Naive thymus-derived CD4-positive, alpha-beta T cell (primary cell): ENCODE measurements at regions of chr12 and their contacts with region 1.

Region 1: GRCh38 chr12:53746592-53747092 is 5.1 kb downstream of the CISTR start:
- DNase-seq: peak; percentile 71 to 89 (median 84)
- ATAC-seq: peak; percentile 95
- H3K4me3 ChIP-seq: no peak overlapping the region
- H3K4me3 Mint-ChIP-seq: peak overlapping the region in 8 of 10 donors; percentile 52 to 78 (median 66)
- H3K27ac ChIP-seq: no peak overlapping the region
- H3K27ac Mint-ChIP-seq: no peak overlapping the region
- H3K4me1 ChIP-seq: peaks cover 9 to 20% of the 10 kb centered on the region in 2 donors
- H3K4me1 Mint-ChIP-seq: peaks cover 3 to 26% (median 7%) of the 10 kb centered on the region in 7 donors
- H3K27me3 ChIP-seq: no peaks in the 10 kb centered on the region
- H3K27me3 Mint-ChIP-seq: peaks cover 31 to 47% (median 35%) of the 10 kb centered on the region in 5 donors

Region 2: GRCh38 chr12:52480073-52480472 is 1266.6 kb before region 1 on chr12:
- CTCF ChIA-PET with region 1: no interaction called
- POLR2A ChIA-PET with region 1: no interaction called
- intact Hi-C with region 1: no loop called
- DNase-seq: no peak
- ATAC-seq: no peak
- H3K4me3 ChIP-seq: no peak overlapping the region
- H3K4me3 Mint-ChIP-seq: no peak overlapping the region
- H3K27ac ChIP-seq: no peak overlapping the region
- H3K27ac Mint-ChIP-seq: no peak overlapping the region
- H3K4me1 ChIP-seq: no peaks in the 10 kb centered on the region
- H3K4me1 Mint-ChIP-seq: no peaks in the 10 kb centered on the region
- H3K27me3 ChIP-seq: no peaks in the 10 kb centered on the region
- H3K27me3 Mint-ChIP-seq: peaks cover 19 to 39% (median 25%) of the 10 kb centered on the region in 5 donors

Region 3: DNA sequence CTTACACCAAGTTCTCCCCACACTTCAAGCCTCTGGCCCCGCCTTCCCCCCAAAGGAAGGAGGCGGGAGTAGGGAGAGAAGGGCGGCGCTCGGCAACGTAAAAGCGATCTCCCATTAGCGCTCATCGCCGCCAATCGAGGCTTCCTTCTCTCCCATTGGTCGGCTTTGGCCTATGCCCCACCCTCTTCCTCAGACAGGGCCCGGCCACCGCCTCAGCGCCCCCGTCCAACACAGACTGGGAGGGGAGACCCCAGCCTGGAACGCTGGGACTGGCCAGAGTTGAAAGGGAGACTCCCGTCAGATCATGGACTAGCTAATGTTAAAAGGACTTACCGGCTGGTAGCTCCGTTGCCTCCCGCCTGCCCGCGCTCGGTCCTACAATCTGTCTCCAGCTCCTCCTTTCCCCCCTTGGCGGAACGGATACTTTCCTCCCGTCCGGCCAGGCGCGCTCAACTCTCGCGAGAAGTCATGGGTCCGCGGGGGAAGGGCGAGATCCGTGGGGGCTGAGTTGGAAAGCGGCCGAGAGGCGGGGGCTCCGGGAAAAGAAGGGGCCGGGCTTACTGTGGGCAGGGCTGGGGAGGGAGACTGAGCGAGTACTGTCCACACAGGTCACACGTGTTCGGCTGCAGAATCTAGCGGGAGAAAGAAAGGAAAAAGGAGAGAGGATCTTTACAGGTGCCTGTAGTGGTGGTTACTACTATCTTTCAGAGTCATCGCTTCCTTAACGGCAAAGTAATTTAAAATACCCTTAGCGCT is 120.5 kb before region 1 on chr12 and contains the start of gene ATF7:
- CTCF ChIA-PET with region 1: interaction called, 4 read pairs
- POLR2A ChIA-PET with region 1: no interaction called
- intact Hi-C with region 1: loop called in 1 of 2 experiments (anchors 5 kb)
- DNase-seq: peak; percentile 95 to 100 (median 99)
- ATAC-seq: peak; percentile 97
- H3K4me3 ChIP-seq: peak within 1 kb of the TSS; percentile 92
- H3K4me3 Mint-ChIP-seq: peak within 1 kb of the TSS; percentile 97 to 100 (median 98)
- H3K27ac ChIP-seq: peak within 1 kb of the TSS; percentile 83
- H3K27ac Mint-ChIP-seq: peak within 1 kb of the TSS; percentile 95 to 99 (median 97)
- H3K4me1 ChIP-seq: peaks cover 20 to 32% of the 10 kb centered on the region in 2 donors
- H3K4me1 Mint-ChIP-seq: peaks cover 30 to 55% (median 49%) of the 10 kb centered on the region in 7 donors
- H3K27me3 ChIP-seq: no peaks in the 10 kb centered on the region
- H3K27me3 Mint-ChIP-seq: peaks cover 0 to 6% (median 0%) of the 10 kb centered on the region in 5 donors
- total RNA-seq, gene ATF7: 21.9 to 39.5 (median 30.9) TPM

Region 4: DNA sequence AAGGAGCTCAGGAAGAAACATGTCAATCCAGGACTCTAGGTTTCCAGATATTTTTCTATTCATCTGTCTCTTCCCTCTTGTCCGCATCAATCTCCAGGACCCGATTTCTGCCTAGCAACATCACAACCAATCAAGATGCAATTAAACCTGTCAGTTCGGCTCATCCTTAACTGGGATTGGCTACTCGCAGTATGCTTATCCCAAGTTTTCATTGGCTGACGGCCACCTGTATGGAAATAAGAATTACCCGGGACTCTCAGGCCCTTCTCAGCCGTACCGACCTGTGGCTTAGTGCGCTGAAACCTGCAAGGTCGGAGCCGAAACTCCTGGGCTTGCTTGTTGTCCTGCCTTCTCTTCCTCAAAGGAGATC is 50.4 kb before region 1 on chr12:
- CTCF ChIA-PET with region 1: interaction called, 143 read pairs
- POLR2A ChIA-PET with region 1: interaction called, 3 read pairs
- intact Hi-C with region 1: loop called (anchors 1 kb)
- DNase-seq: no peak
- ATAC-seq: no peak
- H3K4me3 ChIP-seq: no peak overlapping the region
- H3K4me3 Mint-ChIP-seq: peak overlapping the region; percentile 12 to 88 (median 78)
- H3K27ac ChIP-seq: no peak overlapping the region
- H3K27ac Mint-ChIP-seq: no peak overlapping the region
- H3K4me1 ChIP-seq: peaks cover 7 to 23% of the 10 kb centered on the region in 2 donors
- H3K4me1 Mint-ChIP-seq: peaks cover 26 to 33% (median 30%) of the 10 kb centered on the region in 7 donors
- H3K27me3 ChIP-seq: peaks cover 26 to 30% of the 10 kb centered on the region in 2 donors
- H3K27me3 Mint-ChIP-seq: peaks cover 80 to 91% (median 86%) of the 10 kb centered on the region in 5 donors

Region 5: GRCh38 chr12:53709671-53710070 is 37.0 kb before region 1 on chr12:
- CTCF ChIA-PET with region 1: interaction called, 132 read pairs
- POLR2A ChIA-PET with region 1: no interaction called
- intact Hi-C with region 1: no loop called
- DNase-seq: no peak
- ATAC-seq: no peak
- H3K4me3 ChIP-seq: no peak overlapping the region
- H3K4me3 Mint-ChIP-seq: no peak overlapping the region
- H3K27ac ChIP-seq: no peak overlapping the region
- H3K27ac Mint-ChIP-seq: no peak overlapping the region
- H3K4me1 ChIP-seq: no peaks in the 10 kb centered on the region
- H3K4me1 Mint-ChIP-seq: peaks cover 0 to 2% (median 0%) of the 10 kb centered on the region in 7 donors
- H3K27me3 ChIP-seq: peaks cover 0 to under 1% of the 10 kb centered on the region in 2 donors
- H3K27me3 Mint-ChIP-seq: peaks cover 8 to 36% (median 12%) of the 10 kb centered on the region in 5 donors

Region 6: GRCh38 chr12:53727310-53728041 is 19.2 kb before region 1 on chr12 and contains the start of gene CALCOCO1:
- CTCF ChIA-PET with region 1: interaction called, 104 read pairs
- POLR2A ChIA-PET with region 1: interaction called, 13 read pairs
- intact Hi-C with region 1: loop called (anchors 1 kb)
- DNase-seq: peak; percentile 84 to 98 (median 95)
- ATAC-seq: peak; percentile 98
- H3K4me3 ChIP-seq: peak within 1 kb of the TSS; percentile 94
- H3K4me3 Mint-ChIP-seq: peak within 1 kb of the TSS; percentile 91 to 100 (median 94)
- H3K27ac ChIP-seq: peak within 1 kb of the TSS; percentile 73
- H3K27ac Mint-ChIP-seq: peak within 1 kb of the TSS; percentile 69 to 98 (median 91)
- H3K4me1 ChIP-seq: peaks cover 13 to 17% of the 10 kb centered on the region in 2 donors
- H3K4me1 Mint-ChIP-seq: peaks cover 10 to 41% (median 32%) of the 10 kb centered on the region in 7 donors
- H3K27me3 ChIP-seq: no peaks in the 10 kb centered on the region
- H3K27me3 Mint-ChIP-seq: peaks cover 0 to 13% (median 0%) of the 10 kb centered on the region in 5 donors
- total RNA-seq, gene CALCOCO1: 66.1 to 175 (median 137) TPM

Region 7: GRCh38 chr12:53757095-53757770 is 10.6 kb after region 1 on chr12:
- CTCF ChIA-PET with region 1: interaction called, 55 read pairs
- POLR2A ChIA-PET with region 1: no interaction called
- intact Hi-C with region 1: loop called in 1 of 2 experiments (anchors 1 kb)
- DNase-seq: peak; percentile 49 to 81 (median 69)
- ATAC-seq: peak; percentile 91
- H3K4me3 ChIP-seq: peak overlapping the region; percentile 25
- H3K4me3 Mint-ChIP-seq: peak overlapping the region in 9 of 10 donors; percentile 39 to 64 (median 52)
- H3K27ac ChIP-seq: no peak overlapping the region
- H3K27ac Mint-ChIP-seq: peak overlapping the region in 1 of 9 donors; percentile 74
- H3K4me1 ChIP-seq: peaks cover 0 to 6% of the 10 kb centered on the region in 2 donors
- H3K4me1 Mint-ChIP-seq: peaks cover 0 to 35% (median 5%) of the 10 kb centered on the region in 7 donors
- H3K27me3 ChIP-seq: peaks cover 0 to 10% of the 10 kb centered on the region in 2 donors
- H3K27me3 Mint-ChIP-seq: peaks cover 37 to 51% (median 42%) of the 10 kb centered on the region in 5 donors

Region 8: DNA sequence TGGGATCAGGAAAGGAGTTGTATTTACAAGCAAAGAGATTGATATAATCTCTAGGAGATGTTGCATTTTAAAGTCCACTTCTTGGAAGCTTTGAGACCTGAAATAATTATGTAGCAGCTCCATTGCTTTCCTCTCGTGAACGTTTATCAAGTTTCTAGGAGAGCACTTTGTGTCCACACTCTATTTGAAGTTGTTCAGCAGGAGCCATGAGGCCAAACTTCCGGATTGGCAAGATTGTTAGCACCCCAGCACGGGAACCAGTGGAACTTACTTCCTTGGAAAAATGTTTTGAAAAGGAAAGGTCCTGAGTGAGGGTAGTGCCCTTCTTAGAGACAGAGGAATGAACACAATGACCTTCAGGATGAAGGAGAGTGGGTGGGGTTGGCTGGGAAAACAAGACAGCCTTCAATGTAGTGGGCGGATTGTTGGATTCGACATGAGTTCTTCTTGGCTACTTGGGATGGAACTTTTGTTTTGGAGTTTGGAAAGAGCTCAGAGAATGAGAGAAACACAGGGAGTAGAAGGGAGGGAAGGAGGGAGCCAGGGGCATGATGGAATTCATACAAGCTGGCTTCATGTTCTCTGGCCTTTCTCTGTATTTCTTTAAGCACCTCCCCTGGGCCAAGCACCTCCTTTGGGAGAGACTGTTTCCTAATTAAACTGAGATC is 29.0 kb after region 1 on chr12:
- CTCF ChIA-PET with region 1: no interaction called
- POLR2A ChIA-PET with region 1: no interaction called
- intact Hi-C with region 1: no loop called
- DNase-seq: no peak
- ATAC-seq: no peak
- H3K4me3 ChIP-seq: no peak overlapping the region
- H3K4me3 Mint-ChIP-seq: no peak overlapping the region
- H3K27ac ChIP-seq: no peak overlapping the region
- H3K27ac Mint-ChIP-seq: no peak overlapping the region
- H3K4me1 ChIP-seq: no peaks in the 10 kb centered on the region
- H3K4me1 Mint-ChIP-seq: no peaks in the 10 kb centered on the region
- H3K27me3 ChIP-seq: peaks cover 0 to under 1% of the 10 kb centered on the region in 2 donors
- H3K27me3 Mint-ChIP-seq: peaks cover 30 to 56% (median 51%) of the 10 kb centered on the region in 5 donors